Activated B cell treated with CpG ODN at 0.5 μM for 24 hours (primary cell): ENCODE measurements at regions of chr7 and their contacts with region 1.

Region 1: DNA sequence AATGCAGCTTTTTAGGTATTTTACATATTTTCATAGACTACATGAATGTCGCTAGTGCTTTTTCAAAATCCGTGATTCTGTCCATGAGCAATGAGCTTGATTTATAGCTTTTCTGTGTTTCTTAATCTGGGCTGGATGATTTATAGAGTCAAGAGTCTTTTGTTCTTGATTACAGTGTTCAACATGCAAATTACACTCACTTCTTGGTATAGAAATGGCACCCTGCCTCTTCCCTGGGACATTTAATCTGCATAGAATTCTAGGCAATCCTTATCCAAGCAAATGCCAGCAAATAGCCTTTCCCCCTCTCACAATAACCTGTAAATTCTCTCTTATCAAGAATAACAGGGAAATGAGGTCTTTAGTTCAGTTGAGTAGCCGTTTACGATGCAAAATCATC is 246.2 kb upstream of the SEMA3C start:
- DNase-seq: no peak
- ATAC-seq: no peak
- H3K4me3 Mint-ChIP-seq: no peak overlapping the region
- H3K27ac Mint-ChIP-seq: no peak overlapping the region
- H3K4me1 Mint-ChIP-seq: no peaks in the 10 kb centered on the region
- H3K27me3 Mint-ChIP-seq: no peaks in the 10 kb centered on the region
- CTCF ChIP-seq: no peak

Region 2: GRCh38 chr7:80681272-80681885 is 483.7 kb before region 1 on chr7:
- CTCF ChIA-PET with region 1: no interaction called
- POLR2A ChIA-PET with region 1: no interaction called
- intact Hi-C with region 1: no loop called
- DNase-seq: no peak
- ATAC-seq: no peak
- H3K4me3 Mint-ChIP-seq: no peak overlapping the region
- H3K27ac Mint-ChIP-seq: no peak overlapping the region
- H3K4me1 Mint-ChIP-seq: peaks cover 5% of the 10 kb centered on the region
- H3K27me3 Mint-ChIP-seq: no peaks in the 10 kb centered on the region
- CTCF ChIP-seq: no peak

Region 3: GRCh38 chr7:81064426-81064825 is 100.6 kb before region 1 on chr7:
- CTCF ChIA-PET with region 1: no interaction called
- POLR2A ChIA-PET with region 1: no interaction called
- intact Hi-C with region 1: no loop called
- DNase-seq: no peak
- ATAC-seq: no peak
- H3K4me3 Mint-ChIP-seq: no peak overlapping the region
- H3K27ac Mint-ChIP-seq: no peak overlapping the region
- H3K4me1 Mint-ChIP-seq: no peaks in the 10 kb centered on the region
- H3K27me3 Mint-ChIP-seq: no peaks in the 10 kb centered on the region
- CTCF ChIP-seq: no peak

Region 4: GRCh38 chr7:81081616-81082015 is 83.5 kb before region 1 on chr7:
- CTCF ChIA-PET with region 1: no interaction called
- POLR2A ChIA-PET with region 1: no interaction called
- intact Hi-C with region 1: loop called (anchors 5 kb)
- DNase-seq: no peak
- ATAC-seq: no peak
- H3K4me3 Mint-ChIP-seq: no peak overlapping the region
- H3K27ac Mint-ChIP-seq: no peak overlapping the region
- H3K4me1 Mint-ChIP-seq: no peaks in the 10 kb centered on the region
- H3K27me3 Mint-ChIP-seq: no peaks in the 10 kb centered on the region
- CTCF ChIP-seq: no peak

Region 5: GRCh38 chr7:81128011-81128410 is 37.1 kb before region 1 on chr7:
- CTCF ChIA-PET with region 1: no interaction called
- POLR2A ChIA-PET with region 1: no interaction called
- intact Hi-C with region 1: no loop called
- DNase-seq: no peak
- ATAC-seq: no peak
- H3K4me3 Mint-ChIP-seq: no peak overlapping the region
- H3K27ac Mint-ChIP-seq: no peak overlapping the region
- H3K4me1 Mint-ChIP-seq: no peaks in the 10 kb centered on the region
- H3K27me3 Mint-ChIP-seq: no peaks in the 10 kb centered on the region
- CTCF ChIP-seq: no peak

Region 6: DNA sequence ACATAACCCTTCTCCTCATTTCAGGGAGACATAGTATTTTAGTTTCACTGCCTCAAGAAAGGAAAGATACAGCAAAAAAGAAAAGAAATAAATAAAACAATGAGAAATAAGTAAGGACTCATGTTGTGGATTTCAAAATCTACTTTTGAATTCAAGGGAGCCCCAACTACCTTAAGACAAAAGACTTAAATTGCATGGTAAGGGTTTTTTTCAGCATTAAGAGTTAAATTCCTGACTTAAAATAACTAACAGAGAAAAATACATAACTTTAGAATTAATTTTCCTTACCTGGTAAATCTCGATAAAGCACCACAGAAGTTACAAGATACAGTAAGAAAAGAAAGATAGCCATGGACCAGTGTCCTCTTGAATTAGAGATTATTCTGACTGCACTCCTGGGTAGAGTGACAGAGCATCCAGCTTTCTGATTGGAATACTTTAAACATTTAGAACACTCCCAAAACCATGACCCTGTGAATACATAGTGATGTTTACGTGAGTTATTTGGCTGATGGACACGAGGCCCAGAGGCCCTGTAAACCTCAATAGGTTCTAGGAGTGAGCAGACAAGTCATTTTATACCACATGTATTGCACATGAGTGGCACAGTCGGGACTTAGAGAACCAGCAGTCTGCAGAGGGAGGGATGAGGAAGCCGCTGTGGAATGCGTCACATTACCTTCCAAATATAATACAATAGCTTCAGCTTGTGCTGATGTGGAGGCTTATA is 46.3 kb after region 1 on chr7:
- CTCF ChIA-PET with region 1: no interaction called
- POLR2A ChIA-PET with region 1: no interaction called
- intact Hi-C with region 1: no loop called
- DNase-seq: no peak
- ATAC-seq: no peak
- H3K4me3 Mint-ChIP-seq: no peak overlapping the region
- H3K27ac Mint-ChIP-seq: no peak overlapping the region
- H3K4me1 Mint-ChIP-seq: no peaks in the 10 kb centered on the region
- H3K27me3 Mint-ChIP-seq: no peaks in the 10 kb centered on the region
- CTCF ChIP-seq: no peak